GM23248 (cell line): ENCODE measurements at regions of chr22 and their contacts with region 1.

Region 1: DNA sequence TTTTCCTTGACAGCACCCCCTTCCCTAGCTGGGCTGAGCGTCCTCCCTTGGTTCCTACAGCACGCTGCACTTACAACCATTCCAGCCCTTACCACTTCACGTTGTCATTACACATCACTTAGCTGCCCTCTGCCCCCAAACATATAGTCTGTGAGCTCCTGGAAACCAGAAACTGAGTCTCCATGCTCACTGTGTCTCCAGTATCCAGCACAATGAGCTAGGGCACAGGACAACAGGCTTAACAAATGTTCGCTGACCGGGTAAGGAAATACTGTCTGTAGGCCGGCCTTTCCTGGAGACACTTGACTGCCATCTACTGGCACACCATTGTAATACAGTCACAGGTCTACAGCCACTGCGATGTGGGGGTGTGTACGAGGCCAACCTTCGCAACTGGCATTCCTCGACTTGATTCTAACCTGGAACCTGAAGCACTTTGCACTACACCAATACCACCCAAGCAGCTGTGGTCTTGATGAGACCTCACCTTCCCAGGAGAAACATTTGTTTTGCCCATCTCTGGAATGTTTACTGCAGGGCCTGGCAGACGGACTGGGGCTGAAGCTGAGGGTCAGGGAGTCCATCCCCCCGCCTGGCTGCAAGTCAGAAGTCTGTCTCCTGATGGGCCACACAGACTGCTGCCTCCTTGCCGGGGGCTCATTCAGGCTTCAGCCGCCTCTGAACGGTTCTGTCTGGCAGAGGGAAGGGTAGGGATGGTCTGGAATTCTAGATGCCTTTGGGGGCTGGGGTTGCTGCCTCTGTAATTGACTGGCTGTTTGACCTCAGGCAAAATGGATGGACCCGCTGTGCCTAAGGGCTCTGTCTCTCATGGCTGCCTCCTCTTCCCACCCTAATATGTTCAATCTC is 72.0 kb downstream of the SYN3 start:
- DNase-seq: peak; percentile 86
- H3K4me3 ChIP-seq: no peak overlapping the region
- H3K27ac ChIP-seq: no peak overlapping the region
- H3K4me1 ChIP-seq: peaks cover 6% of the 10 kb centered on the region; the same call in 1 of the 2 replicates
- H3K27me3 ChIP-seq: no peaks in the 10 kb centered on the region

Region 2: DNA sequence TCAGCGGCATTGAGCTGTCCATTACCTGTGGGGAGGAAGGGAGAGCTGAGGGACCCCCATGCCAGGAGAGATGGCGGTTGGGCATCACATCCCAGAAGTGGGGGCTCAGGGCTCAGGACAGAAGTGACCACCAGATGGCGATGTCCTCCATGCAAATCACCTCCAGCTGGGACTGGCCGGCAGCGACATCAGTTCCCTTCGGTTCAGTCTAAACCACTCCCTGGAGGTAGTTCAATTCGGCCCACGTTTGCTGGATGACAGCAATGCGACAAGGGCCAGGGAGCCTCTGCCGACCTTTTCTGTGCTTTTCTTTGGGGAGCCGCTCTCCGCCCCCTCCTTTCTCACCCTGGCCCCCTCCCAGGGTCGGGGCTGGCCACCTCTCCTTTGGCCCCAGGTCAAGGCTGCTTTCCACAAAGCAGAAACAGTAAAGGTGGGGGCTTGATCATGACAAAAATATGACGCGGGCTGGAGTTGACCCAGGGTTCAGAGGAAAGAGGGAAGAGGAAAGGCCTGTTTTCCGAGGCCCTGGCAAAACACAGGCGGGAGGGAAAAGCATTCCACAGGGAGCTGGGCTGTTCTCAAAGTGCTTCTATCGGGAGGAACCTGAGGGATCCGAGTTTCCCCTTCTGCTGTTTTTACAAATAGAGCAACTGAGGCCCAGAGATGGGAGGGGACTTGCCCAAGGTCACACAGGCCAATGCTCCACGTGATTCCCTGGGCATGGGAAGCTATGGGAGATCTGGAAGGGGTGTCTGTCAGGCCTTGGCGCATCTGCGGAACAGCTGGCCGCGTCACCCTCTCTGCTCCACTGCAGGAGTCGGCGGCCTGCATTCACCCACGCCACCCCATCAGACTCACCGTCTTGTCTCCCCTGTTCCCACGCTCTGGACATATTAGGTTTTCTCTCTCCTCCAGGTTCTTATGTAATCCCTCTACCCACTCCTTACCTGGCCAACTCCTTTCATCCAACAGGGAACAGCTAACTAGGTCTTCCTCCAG is 456.8 kb before region 1 on chr22:
- in situ Hi-C with region 1: loop called (anchors 10 kb)
- DNase-seq: peak; percentile 93
- H3K4me3 ChIP-seq: peak overlapping the region; percentile 49; the same call in 1 of the 2 replicates
- H3K27ac ChIP-seq: peak overlapping the region; percentile 81
- H3K4me1 ChIP-seq: peaks cover 35% of the 10 kb centered on the region
- H3K27me3 ChIP-seq: no peaks in the 10 kb centered on the region

Region 3: DNA sequence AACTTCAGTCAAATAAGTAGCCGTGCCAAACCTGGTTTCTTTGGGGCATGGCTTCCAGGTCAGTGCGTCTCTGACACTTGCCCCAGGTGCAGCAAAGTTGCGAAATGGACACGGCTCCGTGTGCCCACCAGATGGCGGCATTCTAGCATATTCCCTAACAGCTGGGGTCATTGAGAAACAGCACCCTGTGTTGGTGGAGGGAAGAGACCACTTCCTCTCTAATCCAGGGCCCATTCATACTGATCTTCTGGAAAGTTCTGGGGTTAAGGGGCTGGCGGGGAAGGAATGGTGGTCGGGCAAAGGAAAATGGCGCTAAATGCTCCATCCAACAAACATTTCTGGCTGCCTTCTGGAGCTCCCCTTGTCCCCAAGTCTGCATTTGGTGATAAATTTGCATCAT is 325.8 kb before region 1 on chr22:
- in situ Hi-C with region 1: loop called (anchors 25 kb)
- DNase-seq: peak; percentile 78
- H3K4me3 ChIP-seq: no peak overlapping the region
- H3K27ac ChIP-seq: no peak overlapping the region
- H3K4me1 ChIP-seq: peaks cover 31% of the 10 kb centered on the region
- H3K27me3 ChIP-seq: no peaks in the 10 kb centered on the region